ENCODE measurements at regions of chr18 and their contacts with region 1.

Region 1: DNA sequence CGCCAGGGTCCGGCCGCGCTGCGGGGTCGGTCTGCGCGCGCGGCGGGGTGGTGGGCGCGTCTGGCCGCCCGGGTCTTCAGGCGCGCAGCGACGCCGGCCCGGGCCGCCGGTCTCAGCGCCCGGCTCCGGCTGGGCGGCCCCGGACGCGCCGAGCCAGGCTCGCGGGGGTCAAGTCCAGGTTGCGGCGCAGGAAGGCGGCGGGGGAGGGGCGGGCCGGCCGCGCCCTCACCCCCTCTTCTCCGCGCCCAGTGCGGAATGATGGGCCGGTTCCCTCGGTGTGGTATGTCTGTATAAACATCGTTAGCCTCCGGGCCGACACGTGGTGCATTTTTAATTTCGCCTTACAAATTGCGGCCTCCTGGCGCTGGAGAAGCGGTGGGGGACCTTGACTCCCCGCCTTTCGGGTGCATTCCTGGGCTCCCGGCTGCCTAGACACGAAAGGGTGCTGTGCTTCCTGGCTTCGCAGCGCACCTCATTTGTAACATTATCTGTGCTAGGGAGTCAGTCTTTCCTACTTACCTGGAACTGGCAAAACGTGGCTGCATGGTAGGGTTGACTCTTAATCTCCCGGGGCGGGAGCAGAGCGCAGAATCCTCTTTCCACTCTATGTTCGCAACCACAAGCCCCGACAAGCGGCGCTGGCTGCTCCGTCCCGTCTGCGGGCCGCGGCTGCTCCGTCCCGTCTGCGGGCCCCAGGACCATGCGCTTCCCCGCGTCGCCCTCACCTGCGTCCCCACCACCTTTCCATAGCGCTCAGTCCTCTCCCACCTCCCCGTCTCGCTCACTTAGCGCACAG is 69.0 kb downstream of the CTAGE1 start:
- DNase-seq: peak in 3 of 10 donors; percentile 13 to 29 (median 23)
- ATAC-seq: peak; percentile 8 to 14
- H3K4me3 Mint-ChIP-seq: peak overlapping the region; percentile 84 to 96 (median 91)
- H3K27ac Mint-ChIP-seq: peak overlapping the region; percentile 93 to 99 (median 97)
- H3K4me1 Mint-ChIP-seq: peaks cover 9 to 55% (median 48%) of the 10 kb centered on the region in 4 donors
- H3K27me3 Mint-ChIP-seq: peaks cover 8 to 31% (median 17%) of the 10 kb centered on the region in 5 donors

Region 2: GRCh38 chr18:22257022-22257543 is 91.6 kb before region 1 on chr18:
- POLR2A ChIA-PET with region 1: no interaction called
- DNase-seq: no peak
- ATAC-seq: no peak
- H3K4me3 Mint-ChIP-seq: no peak overlapping the region
- H3K27ac Mint-ChIP-seq: no peak overlapping the region
- H3K4me1 Mint-ChIP-seq: peaks cover 3 to 13% (median 12%) of the 10 kb centered on the region in 4 donors
- H3K27me3 Mint-ChIP-seq: peaks cover 0 to 12% (median 0%) of the 10 kb centered on the region in 5 donors

Region 3: DNA sequence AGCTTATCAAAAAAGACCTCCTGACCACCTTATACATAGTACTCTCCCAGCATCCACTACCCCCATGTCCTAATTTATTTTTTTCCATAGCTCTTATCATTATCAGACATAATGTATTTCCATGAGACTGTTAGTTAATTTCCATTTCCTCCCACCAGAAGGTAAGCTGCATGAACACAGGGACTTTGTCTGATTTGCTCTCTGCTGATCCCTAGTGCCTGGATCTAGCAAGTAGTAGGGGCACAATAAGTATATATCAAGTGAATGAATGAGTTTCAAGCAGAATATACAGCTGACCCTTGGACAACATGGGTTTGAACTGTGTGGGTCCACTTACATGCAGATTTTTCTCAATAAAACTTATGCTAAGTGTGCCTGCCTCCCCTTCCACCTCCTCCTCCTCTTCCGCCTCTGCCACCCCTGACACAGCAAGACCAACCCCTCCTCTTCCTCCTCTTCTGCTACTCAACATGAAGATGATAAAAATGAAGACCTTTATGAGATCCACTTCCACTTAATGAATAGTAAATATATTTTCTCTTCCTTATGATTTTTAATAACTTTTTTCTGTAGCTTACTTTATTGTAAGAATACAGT is 15.2 kb after region 1 on chr18:
- POLR2A ChIA-PET with region 1: interaction called, 10 read pairs
- DNase-seq: peak in 2 of 10 donors; percentile 5 to 37
- ATAC-seq: peak; percentile 67 to 85
- H3K4me3 Mint-ChIP-seq: no peak overlapping the region
- H3K27ac Mint-ChIP-seq: no peak overlapping the region
- H3K4me1 Mint-ChIP-seq: peaks cover 0 to 4% (median 0%) of the 10 kb centered on the region in 4 donors
- H3K27me3 Mint-ChIP-seq: peaks cover 0 to 3% (median 0%) of the 10 kb centered on the region in 5 donors

Measured in naive thymus-derived CD8-positive, alpha-beta T cell (primary cell).